ENCODE measurements at regions of chr2 and their contacts with region 1.

Region 1: DNA sequence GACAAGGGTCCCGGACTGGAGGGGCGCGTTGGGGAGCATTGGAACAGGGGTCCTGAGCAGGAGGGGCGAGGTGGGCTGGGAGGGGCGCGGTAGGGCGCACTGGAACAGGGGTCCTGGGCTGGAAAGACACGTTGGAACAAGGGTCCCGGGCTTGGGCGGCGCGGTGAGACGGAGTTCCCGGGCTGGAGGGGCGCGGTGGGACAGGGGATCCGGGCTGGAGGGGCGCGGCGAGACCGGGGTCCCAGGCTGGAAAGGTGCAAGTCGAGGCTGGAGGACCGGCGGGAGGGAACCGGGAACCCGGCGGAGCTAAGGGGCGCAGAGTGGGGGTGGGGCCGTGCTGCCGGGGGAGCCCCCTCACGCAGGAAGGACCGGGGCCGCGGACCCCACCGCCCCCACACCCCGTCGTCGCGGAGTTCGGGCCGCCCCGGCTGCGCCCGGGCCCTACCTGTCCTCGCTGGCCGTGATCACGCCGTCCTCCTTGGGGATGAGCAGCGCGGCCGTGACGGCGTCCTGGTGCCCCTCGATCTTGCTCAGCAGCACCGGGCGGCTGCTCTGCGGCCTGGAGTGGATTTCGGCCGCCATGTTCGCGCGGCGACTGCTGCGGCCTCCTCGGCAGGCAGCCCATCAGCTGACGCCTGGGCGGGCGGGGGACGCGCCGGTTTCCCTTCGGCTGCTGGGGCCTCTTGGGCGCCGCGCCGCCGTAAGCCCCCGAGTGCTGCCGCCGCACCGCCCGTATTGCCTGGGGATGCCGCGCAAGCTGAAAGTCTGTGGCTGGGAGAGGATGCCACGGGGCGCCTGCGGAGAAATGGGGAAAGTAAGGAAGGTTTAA is at the start of gene WDFY1:
- DNase-seq: peak; percentile 87
- H3K4me3 ChIP-seq: peak within 1 kb of the TSS; percentile 70 to 79 (median 77)
- H3K27ac ChIP-seq: peak within 1 kb of the TSS; percentile 90
- H3K4me1 ChIP-seq: peaks cover 23% of the 10 kb centered on the region
- H3K27me3 ChIP-seq: no peaks in the 10 kb centered on the region
- CTCF ChIP-seq: no peak
- POLR2A ChIP-seq: peak; percentile 90
- total RNA-seq, gene WDFY1: 66.0 and 68.7 TPM in 2 replicates

Region 2: GRCh38 chr2:223837287-223838061 is 107.4 kb before region 1 on chr2 and contains the start of gene AP1S3:
- CTCF ChIA-PET with region 1: no interaction called
- POLR2A ChIA-PET with region 1: no interaction called
- dilution Hi-C with region 1: no loop called
- intact Hi-C with region 1: loop called (anchors 2 kb)
- DNase-seq: peak; percentile 32
- H3K4me3 ChIP-seq: peak within 1 kb of the TSS; percentile 59 to 68 (median 63)
- H3K27ac ChIP-seq: no peak within 1 kb of the TSS
- H3K4me1 ChIP-seq: peaks cover 7% of the 10 kb centered on the region
- H3K27me3 ChIP-seq: no peaks in the 10 kb centered on the region
- CTCF ChIP-seq: no peak
- POLR2A ChIP-seq: no peak
- total RNA-seq, gene AP1S3: 3.2 and 3.8 TPM in 2 replicates

Region 3: GRCh38 chr2:223918671-223919134 is 26.2 kb before region 1 on chr2:
- CTCF ChIA-PET with region 1: interaction called, 8 read pairs
- POLR2A ChIA-PET with region 1: no interaction called
- dilution Hi-C with region 1: no loop called
- intact Hi-C with region 1: loop called (anchors 1 kb)
- DNase-seq: peak; percentile 82
- H3K4me3 ChIP-seq: no peak overlapping the region
- H3K27ac ChIP-seq: peak overlapping the region; percentile 67
- H3K4me1 ChIP-seq: peaks cover 55% of the 10 kb centered on the region
- H3K27me3 ChIP-seq: no peaks in the 10 kb centered on the region
- CTCF ChIP-seq: no peak
- POLR2A ChIP-seq: no peak

Region 4: DNA sequence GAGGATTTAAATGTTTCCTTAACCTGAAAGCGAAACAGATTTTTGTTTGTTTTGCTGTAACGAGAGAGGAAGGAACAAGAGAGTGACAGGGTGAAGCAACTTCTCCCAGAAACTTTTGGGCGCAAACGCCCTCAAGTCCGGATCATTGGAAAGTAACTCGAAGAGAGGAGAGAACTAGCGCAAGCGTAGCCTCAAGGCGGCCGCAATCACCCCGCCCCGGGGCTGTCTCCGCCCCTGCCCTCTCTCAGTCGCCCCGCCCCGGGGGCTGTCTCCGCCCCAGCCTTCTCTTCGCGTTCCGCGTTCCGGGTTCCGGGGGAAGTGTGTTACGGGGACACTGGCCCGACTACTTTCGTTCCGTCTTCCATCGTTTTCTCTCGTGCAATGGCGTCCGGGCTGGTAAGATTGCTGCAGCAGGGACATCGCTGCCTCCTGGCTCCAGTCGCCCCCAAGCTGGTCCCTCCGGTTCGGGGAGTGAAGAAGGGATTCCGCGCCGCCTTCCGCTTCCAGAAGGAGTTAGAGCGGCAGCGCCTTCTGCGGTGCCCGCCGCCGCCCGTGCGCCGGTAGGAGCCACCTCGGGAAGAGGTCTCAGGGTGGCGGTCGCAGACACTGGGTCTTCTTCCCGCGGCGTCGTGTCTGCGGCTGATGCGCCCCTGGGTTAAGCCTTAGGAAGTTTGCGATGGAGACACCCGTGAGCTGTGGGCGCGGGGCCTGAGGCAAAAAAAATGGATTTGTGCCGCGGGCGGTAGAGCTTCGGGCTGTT is 12.4 kb after region 1 on chr2 and contains the start of gene MRPL44:
- CTCF ChIA-PET with region 1: interaction called, 3 read pairs
- POLR2A ChIA-PET with region 1: no interaction called
- dilution Hi-C with region 1: no loop called
- intact Hi-C with region 1: loop called (anchors 1 kb)
- DNase-seq: peak; percentile 95
- H3K4me3 ChIP-seq: peak within 1 kb of the TSS; percentile 89 to 99 (median 95)
- H3K27ac ChIP-seq: peak within 1 kb of the TSS; percentile 58
- H3K4me1 ChIP-seq: peaks cover 38% of the 10 kb centered on the region
- H3K27me3 ChIP-seq: no peaks in the 10 kb centered on the region
- CTCF ChIP-seq: no peak
- POLR2A ChIP-seq: peak; percentile 90
- total RNA-seq, gene MRPL44: 27.7 and 31.5 TPM in 2 replicates

Measured in endothelial cell of umbilical vein (primary cell).